ENCODE measurements at regions of chr1 and their contacts with region 1.

Region 1: DNA sequence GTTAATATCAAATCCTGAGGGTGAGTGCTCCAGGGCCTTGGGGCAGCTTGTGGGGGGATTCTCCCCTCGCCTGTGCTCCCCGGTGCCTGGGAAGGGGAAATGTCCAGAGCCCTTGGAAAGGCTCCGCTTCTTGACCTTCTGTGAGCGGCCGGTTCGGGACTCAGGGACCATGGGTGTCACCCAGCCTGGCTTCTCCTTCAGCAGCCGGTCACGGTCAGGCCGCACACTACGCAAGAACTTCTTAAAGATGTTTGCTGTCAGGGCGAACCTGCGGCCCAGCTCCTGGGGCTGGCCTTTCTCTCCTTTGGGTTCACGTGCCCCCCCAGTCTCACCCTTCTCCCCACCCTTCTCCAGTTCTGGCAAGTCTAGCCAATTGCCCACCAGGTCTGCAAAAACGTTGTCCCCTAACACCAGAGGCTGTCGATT is 12.2 kb downstream of the INKA2 start:
- DNase-seq: no peak
- ATAC-seq: no peak
- H3K4me3 ChIP-seq: no peak overlapping the region
- H3K27ac ChIP-seq: peak overlapping the region in 3 of 10 donors; percentile 10 to 58 (median 31)
- H3K4me1 ChIP-seq: peaks cover 24 to 92% (median 67%) of the 10 kb centered on the region in 9 donors
- H3K27me3 ChIP-seq: no peaks in the 10 kb centered on the region
- CTCF ChIP-seq: no peak

Region 2: GRCh38 chr1:111747282-111747734 is 20.3 kb after region 1 on chr1:
- intact Hi-C with region 1: loop called in 1 of 10 experiments (anchors 2 kb)
- DNase-seq: peak in 1 of 2 donors; percentile 71
- ATAC-seq: peak in 5 of 8 donors; percentile 16 to 72 (median 55)
- H3K4me3 ChIP-seq: no peak overlapping the region
- H3K27ac ChIP-seq: no peak overlapping the region
- H3K4me1 ChIP-seq: peaks cover 3 to 34% (median 30%) of the 10 kb centered on the region in 9 donors
- H3K27me3 ChIP-seq: peaks cover 0 to 7% (median 0%) of the 10 kb centered on the region in 7 donors
- CTCF ChIP-seq: peak; percentile 42 to 73 (median 62)